ENCODE measurements at regions of chr19 and their contacts with region 1.

Region 1: DNA sequence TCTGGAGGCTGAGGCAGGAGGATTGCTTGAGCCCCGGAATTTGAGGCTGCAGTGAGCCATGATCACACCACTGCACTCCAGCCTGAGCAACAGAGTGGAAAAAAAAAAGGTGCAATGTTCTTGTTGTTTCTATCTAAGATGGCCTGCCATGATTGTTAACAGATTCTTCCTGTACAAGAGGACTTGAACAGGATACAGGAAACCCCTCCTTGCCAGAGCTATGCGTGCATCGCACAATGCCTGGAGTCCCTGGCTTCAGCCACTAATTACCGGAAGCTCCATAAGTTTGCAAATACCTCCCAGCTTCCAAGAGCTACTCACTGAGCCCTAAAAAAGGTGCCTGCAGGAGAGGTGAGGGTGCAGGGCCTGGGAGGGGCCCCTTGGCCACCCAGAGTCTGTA is 13.1 kb upstream of the HIF3A start:
- DNase-seq: no peak

Region 2: GRCh38 chr19:46346821-46347571 is 63.2 kb after region 1 on chr19 and contains the start of gene PPP5C:
- intact Hi-C with region 1: loop called (anchors 1 kb)
- DNase-seq: peak; percentile 93
- total RNA-seq, gene PPP5C: 82.8 TPM

Region 3: GRCh38 chr19:46404055-46404752 is 120.4 kb after region 1 on chr19:
- intact Hi-C with region 1: loop called (anchors 5 kb)
- DNase-seq: peak; percentile 80